Activated CD4-positive, alpha-beta memory T cell treated with anti-CD3 and anti-CD28 coated beads, Interleukin-2, amount 10 ng/mL, durations not matched to agents 7 days and 5 days (primary cell): ENCODE measurements at regions of chr1 and their contacts with region 1.

Region 1: DNA sequence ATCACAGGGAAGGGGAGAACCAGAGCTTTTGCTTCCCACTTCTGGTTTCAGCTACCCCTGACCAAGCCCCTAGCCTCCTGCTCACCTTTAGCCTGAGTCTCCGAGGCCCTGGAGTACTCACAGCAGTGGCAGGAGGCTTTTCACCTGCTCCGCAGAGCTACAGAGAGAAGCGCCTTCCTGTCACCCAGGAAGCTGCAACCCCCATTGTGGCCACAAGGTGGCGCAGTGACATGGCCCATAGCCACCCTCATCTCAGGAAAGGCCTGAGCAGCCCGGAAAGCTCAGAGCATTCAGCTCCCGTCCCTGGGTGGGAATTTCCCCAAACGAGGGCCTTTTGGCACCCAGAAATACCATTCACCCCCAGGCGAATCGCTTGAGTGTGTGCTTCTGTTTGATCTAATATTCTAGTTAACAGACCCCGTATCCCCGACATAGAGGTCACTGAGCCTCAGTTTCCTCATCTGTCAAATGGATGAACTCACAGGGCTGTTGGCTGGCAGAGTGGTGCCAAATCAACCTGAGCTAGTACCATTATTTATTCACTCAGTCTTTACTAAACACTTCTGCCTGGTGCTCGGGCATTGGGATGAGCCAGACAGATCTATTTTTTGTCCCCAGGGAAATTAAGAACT is 25.3 kb downstream of the A3GALT2 start:
- DNase-seq: peak; percentile 91
- H3K4me3 Mint-ChIP-seq: no peak overlapping the region
- H3K27ac Mint-ChIP-seq: no peak overlapping the region
- H3K4me1 Mint-ChIP-seq: peaks cover 18% of the 10 kb centered on the region
- H3K27me3 Mint-ChIP-seq: no peaks in the 10 kb centered on the region

Region 2: GRCh38 chr1:32964461-32965250 is 330.9 kb before region 1 on chr1 and contains the start of gene RNF19B:
- CTCF ChIA-PET with region 1: no interaction called
- POLR2A ChIA-PET with region 1: no interaction called
- DNase-seq: peak; percentile 96
- H3K4me3 Mint-ChIP-seq: peak within 1 kb of the TSS; percentile 79
- H3K27ac Mint-ChIP-seq: peak within 1 kb of the TSS; percentile 85
- H3K4me1 Mint-ChIP-seq: peaks cover 60% of the 10 kb centered on the region
- H3K27me3 Mint-ChIP-seq: peaks cover 3% of the 10 kb centered on the region
- total RNA-seq, gene RNF19B: 42.9 to 46.9 TPM

Region 3: GRCh38 chr1:33306648-33307493 is 11.3 kb after region 1 on chr1:
- CTCF ChIA-PET with region 1: interaction called, 14 read pairs
- POLR2A ChIA-PET with region 1: no interaction called
- DNase-seq: no peak
- H3K4me3 Mint-ChIP-seq: no peak overlapping the region
- H3K27ac Mint-ChIP-seq: no peak overlapping the region
- H3K4me1 Mint-ChIP-seq: peaks cover 25% of the 10 kb centered on the region
- H3K27me3 Mint-ChIP-seq: peaks cover 13% of the 10 kb centered on the region

Region 4: DNA sequence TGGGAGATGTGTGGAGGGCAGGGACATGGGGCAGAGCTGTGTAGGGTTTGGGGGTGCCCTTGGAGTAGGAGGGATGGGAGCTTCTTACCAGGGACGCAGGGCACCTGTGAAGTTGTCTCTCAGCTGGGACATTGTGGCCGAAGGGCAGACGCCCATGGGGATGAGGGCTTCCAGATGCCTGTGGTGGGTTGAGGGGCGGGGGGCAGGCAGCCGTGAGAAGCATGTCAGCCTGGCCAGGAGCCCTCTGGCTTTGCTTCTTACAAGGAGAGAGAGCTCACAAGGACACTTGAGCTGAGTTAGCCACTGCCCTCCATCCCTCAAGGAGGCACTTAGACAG is 16.8 kb after region 1 on chr1:
- CTCF ChIA-PET with region 1: interaction called, 11 read pairs
- POLR2A ChIA-PET with region 1: no interaction called
- DNase-seq: no peak
- H3K4me3 Mint-ChIP-seq: no peak overlapping the region
- H3K27ac Mint-ChIP-seq: no peak overlapping the region
- H3K4me1 Mint-ChIP-seq: peaks cover 3% of the 10 kb centered on the region
- H3K27me3 Mint-ChIP-seq: peaks cover 17% of the 10 kb centered on the region

Region 5: DNA sequence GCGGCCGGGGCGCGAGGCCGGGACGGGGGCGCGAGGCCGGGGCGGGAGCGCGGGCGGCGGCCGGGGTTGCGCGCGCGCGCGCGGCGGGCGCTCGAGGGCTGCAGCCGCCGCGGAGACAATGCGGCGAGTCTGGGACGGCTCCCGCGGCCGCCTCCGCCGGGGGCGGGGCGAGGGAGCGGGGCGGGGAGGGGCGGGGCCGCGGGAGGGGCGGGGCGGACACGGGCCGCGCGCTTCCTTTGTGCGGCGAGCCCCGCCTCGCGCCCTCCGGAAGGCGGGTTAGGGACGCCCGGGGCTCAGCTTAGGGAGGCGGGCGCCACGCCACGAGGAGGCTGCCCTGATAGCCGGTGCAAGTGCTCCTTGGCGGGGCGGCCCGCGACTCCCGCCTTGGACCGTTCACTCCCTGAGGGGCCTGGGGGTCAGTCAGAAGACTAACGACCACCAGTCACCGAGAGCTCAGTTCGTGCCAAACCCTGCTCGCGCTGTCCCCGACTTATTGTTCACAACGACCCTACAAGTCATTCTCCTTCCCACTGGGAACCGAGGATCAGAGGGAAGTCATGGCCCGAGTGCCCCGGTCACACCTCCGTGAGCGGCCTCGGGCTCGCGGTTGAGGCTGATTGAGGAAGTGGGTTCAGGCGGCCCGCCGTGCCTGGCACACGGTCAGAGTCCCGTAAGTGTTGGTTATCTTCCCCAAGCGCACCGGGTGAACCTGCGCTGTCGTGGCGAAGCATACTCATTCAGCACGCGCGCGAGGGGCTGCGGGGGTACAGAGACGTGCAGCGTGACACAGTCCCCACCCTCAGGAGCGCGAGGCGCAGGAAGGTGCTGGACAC is 54.4 kb after region 1 on chr1:
- CTCF ChIA-PET with region 1: interaction called, 12 read pairs
- POLR2A ChIA-PET with region 1: interaction called, 12 read pairs
- DNase-seq: peak; percentile 84
- H3K4me3 Mint-ChIP-seq: peak overlapping the region; percentile 86
- H3K27ac Mint-ChIP-seq: peak overlapping the region; percentile 84
- H3K4me1 Mint-ChIP-seq: peaks cover 47% of the 10 kb centered on the region
- H3K27me3 Mint-ChIP-seq: peaks cover 3% of the 10 kb centered on the region

Region 6: DNA sequence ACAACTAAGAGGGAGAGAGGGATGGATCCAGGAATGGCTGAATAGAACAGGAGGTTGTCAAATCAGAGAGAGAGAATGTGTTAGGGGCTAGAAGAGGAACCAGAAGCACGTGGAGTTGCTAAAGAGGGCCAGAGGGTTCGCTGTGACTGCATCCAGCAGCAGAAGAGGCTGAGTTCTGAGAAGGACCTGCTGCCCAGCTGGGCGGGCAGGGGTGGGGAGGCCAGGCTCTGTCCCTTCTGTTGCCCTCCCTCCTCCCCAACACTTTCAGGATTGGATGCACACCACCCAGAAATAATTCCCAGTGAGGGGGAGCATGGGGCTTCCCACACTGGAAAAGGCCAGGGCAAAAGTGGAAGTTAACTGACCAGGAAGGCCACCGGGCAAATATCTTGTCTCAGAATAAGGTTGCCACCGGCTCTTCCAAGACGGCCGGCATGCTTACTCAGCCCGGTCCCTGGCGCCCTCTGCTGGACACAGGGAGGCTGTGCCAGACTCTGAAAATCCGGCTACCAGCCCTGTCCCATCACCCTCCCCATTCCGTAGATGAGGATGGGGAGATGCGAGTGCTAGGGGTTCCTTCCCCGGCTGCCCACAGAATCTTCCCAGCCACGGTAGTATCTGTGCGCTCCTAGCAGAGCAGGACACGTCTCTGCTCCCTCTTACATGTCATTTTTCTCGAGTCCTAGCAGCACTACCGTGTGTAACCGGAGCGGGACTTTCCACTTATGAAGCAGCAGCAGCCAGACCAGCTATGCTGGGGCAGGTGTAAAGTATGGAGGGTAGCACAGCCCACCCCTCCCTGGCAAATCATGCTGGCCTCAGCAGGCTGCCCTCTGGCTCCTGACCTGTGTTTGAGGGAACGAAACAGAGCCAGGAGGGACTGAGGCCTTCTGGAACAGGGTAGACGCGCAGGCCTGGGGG is 72.2 kb after region 1 on chr1:
- CTCF ChIA-PET with region 1: interaction called, 74 read pairs
- POLR2A ChIA-PET with region 1: no interaction called
- DNase-seq: peak; percentile 87
- H3K4me3 Mint-ChIP-seq: no peak overlapping the region
- H3K27ac Mint-ChIP-seq: no peak overlapping the region
- H3K4me1 Mint-ChIP-seq: no peaks in the 10 kb centered on the region
- H3K27me3 Mint-ChIP-seq: peaks cover 5% of the 10 kb centered on the region

Region 7: GRCh38 chr1:33455539-33456501 is 160.3 kb after region 1 on chr1:
- CTCF ChIA-PET with region 1: interaction called, 25 read pairs
- POLR2A ChIA-PET with region 1: no interaction called
- DNase-seq: peak; percentile 58
- H3K4me3 Mint-ChIP-seq: no peak overlapping the region
- H3K27ac Mint-ChIP-seq: no peak overlapping the region
- H3K4me1 Mint-ChIP-seq: peaks cover 4% of the 10 kb centered on the region
- H3K27me3 Mint-ChIP-seq: peaks cover 34% of the 10 kb centered on the region

Region 8: DNA sequence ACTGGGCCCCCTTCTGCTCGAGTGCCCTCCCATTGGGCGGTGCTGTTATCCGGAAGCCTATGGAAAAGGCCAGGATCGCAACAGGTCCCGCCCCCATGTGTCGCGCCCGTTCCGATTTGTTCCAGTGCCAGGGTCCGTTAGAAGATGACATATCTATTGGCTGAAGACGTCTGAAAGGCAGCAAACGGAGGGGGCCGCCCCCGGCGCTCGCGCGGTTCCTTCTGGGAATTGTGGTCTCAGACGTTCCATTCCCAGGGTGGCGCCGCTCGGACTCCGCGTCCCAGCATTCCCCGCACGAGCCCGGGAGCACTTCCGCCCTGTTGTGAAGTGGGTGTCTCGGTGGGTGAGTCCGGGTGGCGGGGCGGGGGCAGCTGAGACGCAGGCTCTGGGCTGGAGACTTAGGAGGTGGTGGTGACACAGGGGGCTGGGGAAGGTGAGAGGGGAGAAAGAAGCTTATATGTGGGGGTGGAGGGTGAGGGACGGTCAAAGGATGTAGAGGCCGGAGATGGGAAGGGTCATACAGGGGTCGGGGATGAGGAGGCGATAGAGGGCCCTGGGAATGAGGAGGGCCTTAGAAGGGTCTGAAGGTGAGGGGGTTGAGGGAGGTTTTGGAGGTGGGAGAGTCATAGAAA is 176.9 kb after region 1 on chr1 and contains the start of gene ZSCAN20:
- CTCF ChIA-PET with region 1: interaction called, 83 read pairs
- POLR2A ChIA-PET with region 1: interaction called, 5 read pairs
- DNase-seq: peak; percentile 88
- H3K4me3 Mint-ChIP-seq: peak within 1 kb of the TSS; percentile 85
- H3K27ac Mint-ChIP-seq: peak within 1 kb of the TSS; percentile 69
- H3K4me1 Mint-ChIP-seq: peaks cover 30% of the 10 kb centered on the region
- H3K27me3 Mint-ChIP-seq: no peaks in the 10 kb centered on the region
- total RNA-seq, gene ZSCAN20: 2.1 to 2.3 TPM